ENCODE measurements at regions of chr3 and their contacts with region 1.

Region 1: GRCh38 chr3:150787741-150788370 is 24.9 kb upstream of the SIAH2 start:
- DNase-seq: peak; percentile 89 to 92
- H3K4me3 ChIP-seq: no peak overlapping the region
- H3K27ac ChIP-seq: no peak overlapping the region
- H3K4me1 ChIP-seq: no peaks in the 10 kb centered on the region
- H3K27me3 ChIP-seq: no peaks in the 10 kb centered on the region
- CTCF ChIP-seq: peak; percentile 62 to 95 (median 90)
- POLR2A ChIP-seq: no peak

Region 2: DNA sequence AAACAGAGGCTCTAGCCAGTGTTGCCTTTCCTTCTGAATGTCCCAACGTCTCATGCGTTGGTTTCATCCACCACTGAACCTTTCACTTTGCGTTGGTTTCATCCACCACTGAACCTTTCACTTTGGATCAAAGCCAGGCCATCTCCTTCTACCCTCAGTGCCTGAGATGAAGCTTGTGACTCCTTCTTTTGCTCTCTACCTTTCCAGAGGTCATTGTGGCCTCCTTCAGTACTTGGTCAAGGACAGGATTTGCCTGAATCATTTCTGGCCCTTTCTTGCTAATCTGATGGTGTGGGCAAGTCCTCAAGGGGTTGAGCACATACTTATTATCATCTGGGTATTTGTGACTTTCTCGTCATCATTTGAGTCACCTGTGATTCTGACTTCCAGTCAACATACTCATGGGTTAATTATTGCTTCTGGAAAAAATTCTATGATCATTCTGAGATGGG is 134.7 kb before region 1 on chr3:
- intact Hi-C with region 1: no loop called
- DNase-seq: no peak
- H3K4me3 ChIP-seq: no peak overlapping the region
- H3K27ac ChIP-seq: no peak overlapping the region
- H3K4me1 ChIP-seq: no peaks in the 10 kb centered on the region
- H3K27me3 ChIP-seq: no peaks in the 10 kb centered on the region
- CTCF ChIP-seq: no peak
- POLR2A ChIP-seq: no peak

Region 3: GRCh38 chr3:150721285-150722130 is 66.3 kb before region 1 on chr3:
- intact Hi-C with region 1: loop called (anchors 10 kb)
- DNase-seq: peak; percentile 21 to 30
- H3K4me3 ChIP-seq: no peak overlapping the region
- H3K27ac ChIP-seq: no peak overlapping the region
- H3K4me1 ChIP-seq: peaks cover 0 to 4% of the 10 kb centered on the region in 2 donors
- H3K27me3 ChIP-seq: no peaks in the 10 kb centered on the region
- CTCF ChIP-seq: peak; percentile 57 to 91 (median 81)
- POLR2A ChIP-seq: no peak

Region 4: DNA sequence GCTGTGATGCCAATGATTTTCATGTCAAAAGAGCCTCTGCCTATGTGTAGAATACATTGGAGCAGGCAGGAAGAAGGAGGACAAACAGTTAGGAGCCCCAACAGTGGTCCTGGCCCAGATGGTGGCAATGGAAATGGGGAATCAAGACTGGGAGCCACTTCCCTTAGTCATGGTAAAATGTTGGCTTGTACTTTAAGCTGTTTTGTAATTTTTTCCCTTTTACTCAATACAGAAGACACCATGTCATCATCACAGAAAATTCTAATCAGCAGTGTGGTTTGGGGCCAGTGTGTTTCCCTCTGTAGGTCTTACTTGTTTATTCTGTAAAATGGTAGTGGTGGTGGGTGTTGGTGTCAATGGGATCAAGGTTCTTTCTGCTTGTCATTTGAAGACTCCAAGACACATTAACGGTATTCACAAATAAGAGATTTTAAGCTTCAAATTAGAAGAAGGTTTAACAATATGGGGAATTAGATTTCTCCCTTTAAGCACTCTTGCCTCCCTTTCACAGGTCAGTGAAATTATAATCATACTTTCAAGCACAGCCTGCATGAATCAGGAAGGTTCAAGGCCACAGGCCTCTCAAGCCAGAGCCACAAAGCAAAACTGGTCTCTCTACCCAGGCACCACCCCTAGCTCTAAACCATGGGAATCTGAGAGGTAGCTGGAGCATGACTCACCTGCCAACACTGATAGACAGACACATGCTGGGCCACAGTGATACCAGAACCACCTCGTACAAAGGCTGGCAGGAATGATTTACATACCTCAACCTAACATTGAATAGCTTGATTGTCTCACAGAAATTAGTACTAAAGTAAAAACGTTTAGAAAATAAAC is 49.8 kb before region 1 on chr3:
- intact Hi-C with region 1: no loop called
- DNase-seq: no peak
- H3K4me3 ChIP-seq: no peak overlapping the region
- H3K27ac ChIP-seq: no peak overlapping the region
- H3K4me1 ChIP-seq: peaks cover 6 to 18% of the 10 kb centered on the region in 2 donors
- H3K27me3 ChIP-seq: no peaks in the 10 kb centered on the region
- CTCF ChIP-seq: no peak
- POLR2A ChIP-seq: no peak

Region 5: DNA sequence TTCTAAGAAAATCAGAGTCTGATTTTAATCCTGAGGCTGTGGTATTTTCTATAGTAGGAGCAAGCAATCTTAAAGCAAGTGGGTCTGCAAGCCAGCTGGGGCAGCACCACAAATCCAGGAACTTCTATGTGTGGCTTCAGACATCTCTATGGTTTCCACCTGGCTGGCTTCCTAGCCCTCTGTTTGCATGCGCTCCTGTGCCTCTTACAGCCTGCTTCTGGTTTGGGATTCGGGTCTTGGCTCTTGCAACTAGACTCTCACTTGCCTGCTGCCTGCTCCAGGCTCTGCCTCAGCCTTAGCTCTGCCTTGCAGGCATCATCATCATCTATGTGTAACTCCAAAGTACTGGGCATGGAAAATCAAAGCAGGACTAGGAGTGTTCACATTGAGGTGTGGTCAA is 74.0 kb after region 1 on chr3:
- intact Hi-C with region 1: loop called (anchors 5 kb)
- DNase-seq: no peak
- H3K4me3 ChIP-seq: no peak overlapping the region
- H3K27ac ChIP-seq: no peak overlapping the region
- H3K4me1 ChIP-seq: no peaks in the 10 kb centered on the region
- H3K27me3 ChIP-seq: no peaks in the 10 kb centered on the region
- CTCF ChIP-seq: no peak
- POLR2A ChIP-seq: no peak

Region 6: DNA sequence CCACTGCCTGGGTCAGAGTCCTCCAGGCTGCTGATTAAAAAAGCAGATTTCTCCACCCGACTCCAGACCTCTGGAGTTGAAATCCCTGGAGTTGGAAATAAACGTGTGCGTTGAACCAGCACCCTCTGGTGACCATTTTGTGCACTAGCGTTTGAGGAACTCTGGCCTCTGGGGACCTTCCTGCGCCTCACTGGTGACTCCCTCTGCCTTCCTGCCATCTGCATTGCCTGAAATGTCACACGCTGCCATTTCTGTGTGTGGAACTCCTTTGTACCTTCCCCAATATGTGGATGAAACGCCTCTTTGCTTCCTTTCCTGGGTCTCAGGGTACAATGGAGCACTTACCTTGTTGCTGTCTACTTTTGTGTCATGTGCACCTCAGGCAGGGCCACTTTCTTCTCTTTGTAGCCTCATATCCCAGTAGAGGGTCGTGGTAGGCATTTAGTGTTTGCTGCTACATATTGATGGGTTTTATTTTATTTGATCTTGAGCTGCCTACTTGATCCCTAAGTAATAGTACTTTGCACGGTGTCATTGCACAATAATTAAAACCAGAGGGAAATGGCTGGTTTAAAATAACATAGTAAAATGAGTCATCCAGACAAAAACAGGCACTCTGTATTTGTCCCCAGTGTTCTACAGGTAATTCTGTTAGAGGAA is 358.3 kb after region 1 on chr3:
- intact Hi-C with region 1: loop called (anchors 5 kb)
- DNase-seq: peak; percentile 72 to 75
- H3K4me3 ChIP-seq: no peak overlapping the region
- H3K27ac ChIP-seq: no peak overlapping the region
- H3K4me1 ChIP-seq: peaks cover 0 to 11% of the 10 kb centered on the region in 2 donors
- H3K27me3 ChIP-seq: no peaks in the 10 kb centered on the region
- CTCF ChIP-seq: peak; percentile 43 to 93 (median 83)
- POLR2A ChIP-seq: no peak

Region 7: GRCh38 chr3:151372063-151372820 is 584.4 kb after region 1 on chr3:
- intact Hi-C with region 1: no loop called
- DNase-seq: no peak
- H3K4me3 ChIP-seq: no peak overlapping the region
- H3K27ac ChIP-seq: no peak overlapping the region
- H3K4me1 ChIP-seq: no peaks in the 10 kb centered on the region
- H3K27me3 ChIP-seq: no peaks in the 10 kb centered on the region
- CTCF ChIP-seq: no peak
- POLR2A ChIP-seq: no peak